Heart right ventricle (tissue), 16 donors: ENCODE measurements at regions of chr9 and their contacts with region 1.

Region 1: DNA sequence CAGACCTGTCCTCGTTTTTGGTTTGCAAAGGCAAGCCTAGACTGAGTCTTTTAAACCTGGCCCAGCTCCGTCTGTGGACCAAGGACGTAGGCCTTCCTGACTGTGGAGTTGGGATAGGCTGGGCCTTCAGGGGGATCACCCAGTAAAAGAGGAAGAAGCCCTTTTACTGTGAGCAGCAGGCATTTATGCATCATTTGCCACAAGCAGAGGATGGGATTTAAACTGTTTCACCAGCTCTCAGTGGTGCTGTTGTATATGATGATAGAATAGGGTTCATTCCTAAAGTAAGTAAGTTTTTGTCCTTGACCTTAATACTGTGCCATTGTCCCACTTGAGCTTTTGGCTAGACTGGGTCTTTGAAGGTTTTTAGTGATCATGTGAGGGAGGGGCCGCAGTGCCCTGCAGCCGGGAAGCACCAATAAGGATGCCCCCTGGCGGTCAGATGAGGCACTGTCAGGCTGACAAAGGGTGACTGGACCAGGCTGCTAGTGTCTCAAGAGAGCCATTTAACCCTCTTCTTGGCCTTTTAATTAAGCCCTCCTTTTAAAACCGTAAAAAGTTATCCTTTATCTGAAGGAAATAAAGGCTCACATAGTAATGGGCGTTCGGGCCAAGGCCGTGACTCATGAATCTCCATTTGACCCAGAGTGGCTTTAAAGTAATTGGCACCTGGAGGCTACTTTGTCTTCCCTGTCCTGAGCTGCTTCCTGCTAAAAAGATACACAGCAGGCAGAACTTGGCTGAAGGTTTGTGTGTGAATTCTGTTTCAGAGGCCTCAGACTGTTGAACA is 74.0 kb downstream of the UBAP1 start:
- DNase-seq: peak; percentile 45 to 78
- ATAC-seq: peak; percentile 49 to 75 (median 54)
- H3K4me3 ChIP-seq: no peak overlapping the region
- H3K27ac ChIP-seq: peak overlapping the region; percentile 36 to 84 (median 74)
- H3K4me1 ChIP-seq: peaks cover 21 to 78% (median 60%) of the 10 kb centered on the region in 9 donors
- H3K27me3 ChIP-seq: no peaks in the 10 kb centered on the region
- CTCF ChIP-seq: peak; percentile 45 to 95 (median 93)

Region 2: DNA sequence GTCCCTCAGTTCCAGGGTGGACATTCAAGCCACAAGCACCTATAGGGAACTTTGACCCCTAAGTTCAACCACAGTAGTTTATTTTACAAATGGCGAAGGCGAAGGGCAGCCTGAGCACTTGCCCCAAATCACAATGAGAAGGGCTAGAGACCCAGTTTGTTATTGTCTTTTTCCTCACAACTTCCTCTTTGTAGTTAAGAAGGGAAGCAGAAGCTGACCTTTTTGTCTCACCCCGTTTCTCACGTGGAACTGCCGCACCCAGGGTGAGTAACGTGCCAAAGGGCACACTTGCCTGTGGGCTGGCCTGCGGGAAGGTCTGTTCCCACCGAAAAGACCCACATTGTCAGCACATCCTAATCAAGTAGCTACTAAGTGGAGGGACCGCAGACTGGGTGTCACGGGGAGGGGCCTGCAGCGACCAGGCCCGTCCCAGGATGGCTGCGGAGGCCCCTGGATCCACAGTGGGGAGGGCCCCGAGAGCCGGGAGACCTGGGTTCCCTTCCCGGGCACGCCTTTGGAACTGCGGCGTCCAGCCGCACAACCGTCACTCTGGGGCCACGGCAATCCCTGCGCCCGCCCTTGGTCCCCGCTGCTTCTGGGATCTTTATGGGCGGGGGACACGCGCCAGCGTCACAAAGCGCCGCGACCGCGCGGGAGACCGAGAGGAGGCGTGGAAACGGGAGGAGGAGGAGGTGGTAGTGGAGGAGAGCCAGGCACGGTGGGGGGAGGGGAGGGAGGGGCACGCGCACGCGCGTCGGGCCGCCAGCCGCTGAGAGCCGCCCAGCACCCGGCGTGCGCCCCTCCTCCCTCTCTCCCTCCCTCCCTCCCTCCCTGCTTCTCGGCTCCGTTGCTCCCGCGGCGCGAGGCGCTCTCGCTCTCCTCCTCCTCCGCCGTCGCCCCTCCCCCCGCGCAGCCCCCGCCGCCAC is 436.3 kb before region 1 on chr9 and contains the start of gene UBE2R2:
- intact Hi-C with region 1: loop called in 2 of 10 experiments (anchors 5 to 10 kb)
- DNase-seq: peak; percentile 94
- ATAC-seq: peak; percentile 89 to 94 (median 92)
- H3K4me3 ChIP-seq: peak within 1 kb of the TSS; percentile 65 to 96 (median 90)
- H3K27ac ChIP-seq: peak within 1 kb of the TSS; percentile 98 to 100 (median 99)
- H3K4me1 ChIP-seq: peaks cover 6 to 63% (median 51%) of the 10 kb centered on the region in 9 donors
- H3K27me3 ChIP-seq: no peaks in the 10 kb centered on the region
- CTCF ChIP-seq: no peak
- total RNA-seq, gene UBE2R2: 38.8 to 47.9 (median 41.5) TPM

Region 3: DNA sequence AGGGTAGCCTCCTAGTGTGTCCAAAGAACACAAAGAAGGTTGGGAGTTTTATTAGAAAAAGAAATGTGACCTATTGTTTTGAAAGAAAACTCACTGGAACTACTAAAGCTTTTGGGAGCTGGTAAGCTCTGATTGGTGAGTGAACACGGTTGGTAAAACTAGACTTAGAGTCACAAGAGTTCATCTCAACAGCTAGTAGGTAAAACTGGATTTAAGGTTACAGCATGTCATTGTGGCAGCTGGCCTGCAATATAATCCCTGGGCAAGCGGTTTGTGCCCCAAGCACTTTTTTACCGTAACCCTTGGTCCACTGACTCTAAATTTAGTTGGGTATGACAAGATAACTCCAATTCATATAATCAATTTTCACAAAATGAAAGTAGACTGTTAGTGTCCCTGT is 251.6 kb before region 1 on chr9:
- intact Hi-C with region 1: loop called in 1 of 10 experiments (anchors 10 kb)
- DNase-seq: no peak
- ATAC-seq: no peak
- H3K4me3 ChIP-seq: no peak overlapping the region
- H3K27ac ChIP-seq: no peak overlapping the region
- H3K4me1 ChIP-seq: peaks cover 0 to 3% (median 0%) of the 10 kb centered on the region in 9 donors
- H3K27me3 ChIP-seq: no peaks in the 10 kb centered on the region
- CTCF ChIP-seq: no peak

Region 4: DNA sequence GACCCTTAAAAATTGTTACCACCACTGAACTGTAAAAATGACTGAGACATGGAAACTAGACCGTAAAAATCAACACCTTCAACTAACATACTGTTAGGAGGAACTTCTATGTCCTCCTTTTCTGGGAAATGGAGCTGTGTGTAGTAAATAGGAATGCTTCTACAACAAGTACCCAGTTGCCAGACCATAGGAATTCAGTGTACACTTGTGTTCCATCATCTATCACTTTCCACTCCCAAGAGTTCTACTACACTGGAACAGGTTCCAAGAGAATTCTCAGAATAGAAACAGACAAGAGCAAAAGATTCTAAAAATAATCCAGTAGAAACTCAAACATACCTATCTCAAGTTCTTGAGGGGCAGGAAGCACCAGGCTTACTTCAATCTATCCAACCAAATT is 227.8 kb before region 1 on chr9:
- intact Hi-C with region 1: loop called in 1 of 10 experiments (anchors 10 kb)
- DNase-seq: peak in 1 of 2 donors; percentile 22
- ATAC-seq: peak; percentile 69 to 96 (median 90)
- H3K4me3 ChIP-seq: no peak overlapping the region
- H3K27ac ChIP-seq: peak overlapping the region in 9 of 10 donors; percentile 33 to 69 (median 60)
- H3K4me1 ChIP-seq: peaks cover 0 to 28% (median 8%) of the 10 kb centered on the region in 9 donors
- H3K27me3 ChIP-seq: no peaks in the 10 kb centered on the region
- CTCF ChIP-seq: no peak

Region 5: DNA sequence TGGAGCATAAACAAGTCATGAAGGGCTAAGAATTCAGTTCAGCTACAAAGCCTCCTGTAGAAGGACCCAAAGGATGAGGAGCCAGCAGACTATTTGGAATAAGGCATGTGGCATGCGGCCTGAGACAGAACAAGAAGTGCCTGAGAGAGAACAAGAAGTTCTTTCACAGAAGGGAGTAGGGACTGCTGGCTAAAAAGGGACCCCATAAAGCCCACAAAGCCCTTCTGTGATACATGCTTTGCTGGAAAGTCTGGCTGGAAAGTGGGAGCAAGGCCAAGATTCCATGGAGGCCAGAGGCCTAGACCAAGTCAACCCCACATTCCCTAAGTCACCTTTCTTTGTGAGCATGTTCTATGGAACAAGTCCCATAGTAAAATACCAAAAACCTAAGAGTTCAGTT is 168.3 kb before region 1 on chr9:
- intact Hi-C with region 1: loop called in 3 of 10 experiments (anchors 5 to 10 kb)
- DNase-seq: peak in 1 of 2 donors; percentile 27
- ATAC-seq: peak; percentile 55 to 83 (median 60)
- H3K4me3 ChIP-seq: no peak overlapping the region
- H3K27ac ChIP-seq: peak overlapping the region in 9 of 10 donors; percentile 10 to 80 (median 61)
- H3K4me1 ChIP-seq: peaks cover 0 to 40% (median 18%) of the 10 kb centered on the region in 9 donors
- H3K27me3 ChIP-seq: no peaks in the 10 kb centered on the region
- CTCF ChIP-seq: no peak

Region 6: DNA sequence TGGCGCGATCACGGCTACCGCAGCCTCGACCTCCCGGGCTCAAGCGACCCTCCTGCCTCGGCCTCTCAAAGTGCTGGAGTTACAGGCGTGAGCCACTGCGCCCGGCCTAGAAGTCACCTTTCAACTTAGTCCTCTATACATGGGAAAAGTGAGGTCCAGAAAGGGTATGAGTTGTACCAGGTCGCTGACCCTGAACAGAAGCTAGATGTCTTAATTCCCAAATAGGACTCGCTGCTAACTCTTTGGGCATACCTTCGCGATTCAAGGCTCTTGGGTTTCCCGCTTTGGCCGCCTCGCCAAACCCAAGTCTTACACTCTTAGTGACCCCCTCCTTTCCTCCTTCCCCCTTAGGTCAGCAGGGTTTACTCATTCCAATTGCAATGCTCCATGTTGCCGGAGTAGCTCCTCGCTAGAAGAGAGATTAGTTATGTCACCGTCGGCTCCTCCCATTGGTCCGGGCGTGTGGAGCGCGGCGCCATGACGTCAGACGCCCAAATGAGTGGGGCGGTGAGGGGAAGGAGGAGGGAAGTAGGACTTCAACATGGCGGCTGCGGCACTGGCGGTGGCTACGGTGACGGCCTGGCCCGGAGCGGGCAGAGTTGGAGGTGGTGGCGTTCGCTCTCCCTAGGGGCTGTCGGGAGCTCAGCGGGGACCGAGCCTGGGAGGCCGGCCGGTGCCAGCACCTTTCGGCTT is 74.2 kb before region 1 on chr9 and contains the start of gene UBAP1:
- intact Hi-C with region 1: loop called in 6 of 10 experiments (anchors 2 to 5 kb)
- DNase-seq: peak; percentile 95 to 97
- ATAC-seq: peak; percentile 98 to 100 (median 100)
- H3K4me3 ChIP-seq: peak within 1 kb of the TSS; percentile 62 to 90 (median 72)
- H3K27ac ChIP-seq: peak within 1 kb of the TSS; percentile 68 to 97 (median 92)
- H3K4me1 ChIP-seq: peaks cover 0 to 35% (median 17%) of the 10 kb centered on the region in 9 donors
- H3K27me3 ChIP-seq: no peaks in the 10 kb centered on the region
- CTCF ChIP-seq: no peak
- total RNA-seq, gene UBAP1: 39.5 to 54.2 (median 43.3) TPM

Region 7: DNA sequence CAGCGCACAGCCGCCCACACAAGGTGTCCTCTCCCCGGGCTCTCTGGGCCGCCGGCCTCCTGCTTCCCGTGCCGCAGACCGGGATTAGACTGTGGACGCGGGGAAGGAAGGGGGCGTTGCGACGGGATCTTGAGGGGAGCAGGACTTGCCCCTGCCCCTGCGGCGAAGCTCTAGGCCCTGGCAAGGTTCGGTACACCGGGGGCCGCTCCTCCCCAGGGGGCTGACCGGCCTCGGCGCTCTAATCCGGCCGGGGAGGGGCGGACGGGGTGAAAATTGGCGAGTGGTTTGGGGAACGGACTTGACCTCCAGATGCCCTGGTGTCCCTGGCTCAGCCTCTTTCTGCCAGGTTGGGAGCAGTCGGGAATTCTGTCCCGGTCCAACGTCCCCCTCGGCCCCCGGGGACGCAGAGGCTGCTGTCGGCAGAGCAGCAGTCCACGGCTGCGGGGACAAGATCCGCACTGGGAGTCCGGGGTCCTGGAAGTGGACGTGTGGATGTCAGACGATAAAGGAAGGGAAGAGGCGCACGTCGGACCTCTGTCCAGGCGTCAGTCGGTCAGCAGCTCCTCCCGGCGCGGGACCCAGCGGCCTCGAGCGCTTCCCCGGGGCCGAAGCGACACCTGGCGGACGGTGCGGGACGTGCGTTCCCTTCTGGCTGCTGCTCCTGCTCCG is 338.5 kb after region 1 on chr9:
- intact Hi-C with region 1: loop called in 1 of 10 experiments (anchors 10 kb)
- DNase-seq: peak; percentile 85 to 90
- ATAC-seq: peak; percentile 81 to 96 (median 89)
- H3K4me3 ChIP-seq: peak overlapping the region in 9 of 10 donors; percentile 32 to 57 (median 51)
- H3K27ac ChIP-seq: peak overlapping the region in 6 of 10 donors; percentile 12 to 54 (median 32)
- H3K4me1 ChIP-seq: peaks cover 16 to 53% (median 38%) of the 10 kb centered on the region in 9 donors
- H3K27me3 ChIP-seq: peaks cover 0 to 86% (median 56%) of the 10 kb centered on the region in 7 donors
- CTCF ChIP-seq: peak; percentile 82 to 95 (median 92)